Transverse colon (tissue), 4 donors: ENCODE measurements at regions of chr2 and their contacts with region 1.

Region 1: DNA sequence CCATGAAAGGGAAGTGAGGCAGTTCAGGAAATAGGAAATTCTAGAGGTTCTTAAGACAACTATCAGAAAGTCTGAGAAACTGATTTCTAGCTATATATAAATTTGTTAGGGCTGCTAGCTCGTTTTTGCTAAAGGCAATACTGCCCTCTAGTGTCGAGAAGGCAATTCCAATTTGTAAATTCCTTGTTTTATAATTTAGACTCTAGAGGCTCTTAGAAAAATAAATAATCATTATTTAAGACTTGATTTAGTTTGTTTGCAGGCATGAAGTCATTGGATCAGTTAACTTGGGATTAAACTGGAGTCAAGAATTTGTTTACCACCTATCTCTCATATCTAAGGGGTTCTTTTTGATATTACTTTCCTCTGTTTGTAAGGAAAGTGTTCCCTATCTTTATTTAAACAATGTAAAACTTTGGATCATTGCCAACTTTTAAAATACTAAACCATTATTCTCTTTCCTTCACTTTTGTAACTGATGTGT is 66.2 kb downstream of the ACVR2A start:
- DNase-seq: no peak
- H3K4me3 ChIP-seq: no peak overlapping the region
- H3K27ac ChIP-seq: no peak overlapping the region
- H3K4me1 ChIP-seq: peaks cover 0 to 27% (median 4%) of the 10 kb centered on the region in 4 donors
- H3K27me3 ChIP-seq: no peaks in the 10 kb centered on the region
- CTCF ChIP-seq: peak; percentile 74 to 80 (median 77)
- EP300 ChIP-seq: no peak
- POLR2A ChIP-seq: no peak

Region 2: DNA sequence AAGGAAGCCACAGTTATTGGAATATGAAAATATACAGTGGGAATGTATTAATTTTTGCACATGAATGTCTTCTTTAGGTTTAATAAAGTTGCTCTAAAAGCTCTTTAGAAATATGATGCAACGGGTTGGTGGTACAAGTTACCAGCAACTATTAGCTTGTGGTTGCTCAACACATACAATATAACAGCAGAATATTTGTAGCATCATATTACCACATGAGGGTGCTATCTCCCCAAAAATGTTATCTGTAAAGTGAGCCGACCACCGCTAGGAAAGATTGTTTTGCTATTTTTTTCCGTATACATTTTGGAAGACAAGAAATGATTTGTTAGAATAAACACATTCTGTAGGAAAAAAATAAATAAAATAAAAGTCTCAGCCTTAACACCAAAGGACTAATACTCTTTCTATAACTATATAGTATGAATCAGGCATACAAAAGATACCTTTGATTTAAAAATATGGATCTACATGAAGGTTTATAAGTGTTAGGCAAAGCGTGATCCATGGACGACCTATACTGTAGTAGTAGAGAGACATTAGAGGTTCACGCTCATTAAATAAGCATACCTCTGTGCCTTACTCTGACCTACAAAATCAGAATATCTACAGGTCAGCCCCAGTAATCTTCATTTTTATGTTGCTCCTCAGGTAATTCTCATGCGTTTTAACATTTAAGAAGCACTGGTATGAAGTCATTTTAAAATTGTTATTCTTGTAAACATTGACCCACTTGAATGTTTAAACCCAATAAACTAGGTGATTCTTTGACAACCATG is 1176.8 kb before region 1 on chr2:
- in situ Hi-C with region 1: loop called in 3 of 4 experiments (anchors 25 kb)
- intact Hi-C with region 1: no loop called
- DNase-seq: no peak
- H3K4me3 ChIP-seq: no peak overlapping the region
- H3K27ac ChIP-seq: no peak overlapping the region
- H3K4me1 ChIP-seq: peaks cover 0 to 5% (median 0%) of the 10 kb centered on the region in 4 donors
- H3K27me3 ChIP-seq: no peaks in the 10 kb centered on the region
- CTCF ChIP-seq: peak; percentile 35 to 52 (median 49)
- EP300 ChIP-seq: no peak
- POLR2A ChIP-seq: no peak

Region 3: DNA sequence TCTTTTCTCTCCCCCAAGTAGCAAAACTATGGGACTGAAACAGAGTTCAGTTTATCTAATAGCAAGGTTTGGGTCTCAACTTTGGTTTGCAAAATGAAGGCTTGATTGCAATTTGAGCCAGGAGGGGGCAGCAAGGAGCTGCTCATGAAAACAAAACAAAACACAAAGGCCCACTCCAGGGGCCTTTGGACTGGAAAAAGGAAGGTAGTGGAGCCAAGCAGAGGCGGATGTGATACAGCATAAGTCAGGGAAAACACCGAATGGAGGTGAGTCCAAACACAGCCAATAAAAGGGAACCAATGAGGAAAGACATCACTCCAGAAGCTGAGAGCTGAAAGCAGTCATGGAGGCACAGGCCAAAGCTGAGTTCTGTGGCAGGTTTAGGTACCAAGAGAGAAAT is 865.9 kb before region 1 on chr2:
- in situ Hi-C with region 1: loop called in 2 of 4 experiments (anchors 10 to 25 kb)
- intact Hi-C with region 1: no loop called
- DNase-seq: peak; percentile 60
- H3K4me3 ChIP-seq: no peak overlapping the region
- H3K27ac ChIP-seq: no peak overlapping the region
- H3K4me1 ChIP-seq: peaks cover 0 to 9% (median 3%) of the 10 kb centered on the region in 4 donors
- H3K27me3 ChIP-seq: peaks cover 3% of the 10 kb centered on the region
- CTCF ChIP-seq: peak; percentile 53 to 67 (median 54)
- EP300 ChIP-seq: no peak
- POLR2A ChIP-seq: no peak

Region 4: GRCh38 chr2:147051248-147051647 is 859.8 kb before region 1 on chr2:
- in situ Hi-C with region 1: loop called in 2 of 4 experiments (anchors 10 to 25 kb)
- intact Hi-C with region 1: no loop called
- DNase-seq: no peak
- H3K4me3 ChIP-seq: no peak overlapping the region
- H3K27ac ChIP-seq: no peak overlapping the region
- H3K4me1 ChIP-seq: peaks cover 0 to 5% (median 0%) of the 10 kb centered on the region in 4 donors
- H3K27me3 ChIP-seq: peaks cover 14% of the 10 kb centered on the region
- CTCF ChIP-seq: no peak
- EP300 ChIP-seq: no peak
- POLR2A ChIP-seq: no peak

Region 5: GRCh38 chr2:147082850-147083522 is 828.0 kb before region 1 on chr2:
- in situ Hi-C with region 1: loop called in 1 of 4 experiments (anchors 25 kb)
- intact Hi-C with region 1: no loop called
- DNase-seq: peak; percentile 43
- H3K4me3 ChIP-seq: no peak overlapping the region
- H3K27ac ChIP-seq: no peak overlapping the region
- H3K4me1 ChIP-seq: no peaks in the 10 kb centered on the region
- H3K27me3 ChIP-seq: no peaks in the 10 kb centered on the region
- CTCF ChIP-seq: peak; percentile 79 to 90 (median 83)
- EP300 ChIP-seq: no peak
- POLR2A ChIP-seq: no peak

Region 6: GRCh38 chr2:147433822-147434221 is 477.2 kb before region 1 on chr2:
- in situ Hi-C with region 1: no loop called
- intact Hi-C with region 1: no loop called
- DNase-seq: no peak
- H3K4me3 ChIP-seq: no peak overlapping the region
- H3K27ac ChIP-seq: no peak overlapping the region
- H3K4me1 ChIP-seq: no peaks in the 10 kb centered on the region
- H3K27me3 ChIP-seq: no peaks in the 10 kb centered on the region
- CTCF ChIP-seq: no peak
- EP300 ChIP-seq: no peak
- POLR2A ChIP-seq: no peak